ENCODE measurements at regions of chr14 and their contacts with region 1.

Region 1: GRCh38 chr14:90911121-90911520 is 94.9 kb upstream of the TTC7B start:
- DNase-seq: no peak
- ATAC-seq: no peak
- H3K4me3 Mint-ChIP-seq: no peak overlapping the region
- H3K27ac Mint-ChIP-seq: peak overlapping the region; percentile 47
- H3K4me1 Mint-ChIP-seq: peaks cover 15% of the 10 kb centered on the region
- H3K27me3 Mint-ChIP-seq: no peaks in the 10 kb centered on the region
- CTCF ChIP-seq: no peak

Region 2: GRCh38 chr14:90936757-90937440 is 25.8 kb after region 1 on chr14:
- CTCF ChIA-PET with region 1: no interaction called
- POLR2A ChIA-PET with region 1: no interaction called
- intact Hi-C with region 1: no loop called
- DNase-seq: no peak
- ATAC-seq: no peak
- H3K4me3 Mint-ChIP-seq: no peak overlapping the region
- H3K27ac Mint-ChIP-seq: no peak overlapping the region
- H3K4me1 Mint-ChIP-seq: no peaks in the 10 kb centered on the region
- H3K27me3 Mint-ChIP-seq: no peaks in the 10 kb centered on the region
- CTCF ChIP-seq: no peak

Region 3: GRCh38 chr14:91119556-91120311 is 208.6 kb after region 1 on chr14:
- CTCF ChIA-PET with region 1: no interaction called
- POLR2A ChIA-PET with region 1: interaction called, 10 read pairs
- intact Hi-C with region 1: no loop called
- DNase-seq: no peak
- ATAC-seq: no peak
- H3K4me3 Mint-ChIP-seq: no peak overlapping the region
- H3K27ac Mint-ChIP-seq: no peak overlapping the region
- H3K4me1 Mint-ChIP-seq: peaks cover 73% of the 10 kb centered on the region
- H3K27me3 Mint-ChIP-seq: no peaks in the 10 kb centered on the region
- CTCF ChIP-seq: no peak